SK-MEL-5 (cell line): ENCODE measurements at regions of chr7 and their contacts with region 1.

Region 1: DNA sequence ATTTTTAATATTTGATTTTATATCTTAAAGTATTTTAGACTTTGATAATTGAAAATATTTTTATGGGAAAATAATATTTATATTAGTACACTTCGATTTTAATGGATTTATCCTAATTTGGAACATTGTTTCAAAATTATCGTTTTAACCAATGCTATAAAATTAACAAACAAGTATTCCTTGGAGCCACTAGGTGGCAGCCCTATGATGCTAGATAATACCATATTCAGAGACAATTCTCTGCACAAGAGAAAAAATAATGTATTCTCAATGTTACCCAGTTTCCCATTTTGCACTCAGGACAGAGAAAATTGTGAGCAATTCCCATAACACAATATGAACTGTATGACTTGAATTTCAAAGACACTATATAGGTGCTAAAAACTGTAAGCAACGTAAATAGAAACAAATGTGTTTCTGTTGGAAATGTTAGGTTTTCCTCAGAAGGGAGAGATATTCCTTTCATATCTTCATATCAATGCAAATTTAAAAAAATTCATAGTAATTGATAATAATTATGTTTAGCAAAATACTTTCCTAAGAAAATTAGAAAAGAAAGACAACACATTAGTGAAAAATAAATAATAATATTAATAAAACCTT is 237.8 kb downstream of the SEMA3E start:
- DNase-seq: peak; percentile 73

Region 2: GRCh38 chr7:83130623-83131545 is 280.2 kb before region 1 on chr7:
- in situ Hi-C with region 1: no loop called
- DNase-seq: no peak

Region 3: GRCh38 chr7:83517035-83517700 is 106.1 kb after region 1 on chr7:
- in situ Hi-C with region 1: loop called (anchors 10 kb)
- DNase-seq: no peak

Region 4: DNA sequence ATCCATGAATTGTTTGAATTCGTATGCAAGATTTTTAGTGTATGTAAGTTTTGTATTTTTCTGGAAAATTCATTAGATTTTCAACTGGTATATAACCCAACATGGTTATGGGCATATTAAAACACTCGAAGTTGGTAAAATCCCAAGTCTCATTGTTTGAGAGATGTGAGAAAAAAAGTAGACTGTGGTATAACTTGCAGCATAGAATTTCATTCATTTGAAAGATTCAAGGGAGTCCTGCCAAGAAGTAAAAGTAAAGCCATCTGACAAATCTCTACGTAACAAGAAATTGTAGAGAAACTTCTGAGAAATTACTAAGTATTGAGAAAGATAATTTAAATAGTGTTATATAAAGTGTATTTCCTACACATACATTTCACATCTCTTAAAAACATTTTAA is 197.6 kb after region 1 on chr7:
- in situ Hi-C with region 1: no loop called
- DNase-seq: no peak

Region 5: DNA sequence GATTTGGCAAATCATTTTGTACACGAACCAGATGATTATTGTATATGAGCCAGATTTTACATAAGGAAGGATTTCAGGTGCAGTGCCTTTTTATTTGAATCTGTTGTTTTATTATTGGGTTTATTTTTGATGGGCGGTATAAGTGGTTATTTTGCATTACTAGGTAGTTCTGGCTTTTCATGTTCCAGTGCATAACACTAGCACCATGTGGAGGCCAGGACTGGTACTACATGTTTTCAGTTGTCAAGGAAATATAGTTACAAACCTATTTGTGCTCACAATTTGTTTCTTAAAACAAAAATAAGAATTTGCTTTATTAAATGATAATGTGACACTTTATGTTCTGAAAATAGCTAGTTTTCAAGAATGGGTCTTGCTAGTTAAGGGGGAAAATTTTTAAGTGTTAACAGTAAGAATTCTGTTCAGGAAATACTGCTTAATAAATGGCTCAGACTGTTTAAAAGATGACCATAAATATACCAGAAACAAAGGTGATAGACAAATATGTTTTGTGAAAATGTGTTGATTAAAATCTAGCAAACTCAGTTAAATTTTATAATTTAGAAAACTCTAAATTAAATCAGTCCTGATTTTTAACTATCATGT is 245.0 kb after region 1 on chr7:
- in situ Hi-C with region 1: loop called (anchors 25 kb)
- DNase-seq: peak; percentile 69

Region 6: GRCh38 chr7:83684894-83685293 is 273.8 kb after region 1 on chr7:
- in situ Hi-C with region 1: no loop called
- DNase-seq: no peak